GM12878 (cell line): ENCODE measurements at regions of chr17 and their contacts with region 1.

Region 1: GRCh38 chr17:28726226-28727130 is at the start of gene TLCD1:
- DNase-seq: no peak
- ATAC-seq: peak; percentile 44
- H3K4me3 ChIP-seq: peak within 1 kb of the TSS; percentile 72
- H3K27ac ChIP-seq: peak within 1 kb of the TSS; percentile 94
- H3K4me1 ChIP-seq: peaks cover 23% of the 10 kb centered on the region
- H3K27me3 ChIP-seq: no peaks in the 10 kb centered on the region
- CTCF ChIP-seq: peak; percentile 99 to 100 (median 99); a peak in 5 of 6 replicates
- EP300 ChIP-seq: no peak
- POLR2A ChIP-seq: no peak; the same call in 1 of the 2 replicates
- RAD21 ChIP-seq: peak; percentile 98
- polyA plus RNA-seq, gene TLCD1: 2.9 to 7.1 TPM

Region 2: DNA sequence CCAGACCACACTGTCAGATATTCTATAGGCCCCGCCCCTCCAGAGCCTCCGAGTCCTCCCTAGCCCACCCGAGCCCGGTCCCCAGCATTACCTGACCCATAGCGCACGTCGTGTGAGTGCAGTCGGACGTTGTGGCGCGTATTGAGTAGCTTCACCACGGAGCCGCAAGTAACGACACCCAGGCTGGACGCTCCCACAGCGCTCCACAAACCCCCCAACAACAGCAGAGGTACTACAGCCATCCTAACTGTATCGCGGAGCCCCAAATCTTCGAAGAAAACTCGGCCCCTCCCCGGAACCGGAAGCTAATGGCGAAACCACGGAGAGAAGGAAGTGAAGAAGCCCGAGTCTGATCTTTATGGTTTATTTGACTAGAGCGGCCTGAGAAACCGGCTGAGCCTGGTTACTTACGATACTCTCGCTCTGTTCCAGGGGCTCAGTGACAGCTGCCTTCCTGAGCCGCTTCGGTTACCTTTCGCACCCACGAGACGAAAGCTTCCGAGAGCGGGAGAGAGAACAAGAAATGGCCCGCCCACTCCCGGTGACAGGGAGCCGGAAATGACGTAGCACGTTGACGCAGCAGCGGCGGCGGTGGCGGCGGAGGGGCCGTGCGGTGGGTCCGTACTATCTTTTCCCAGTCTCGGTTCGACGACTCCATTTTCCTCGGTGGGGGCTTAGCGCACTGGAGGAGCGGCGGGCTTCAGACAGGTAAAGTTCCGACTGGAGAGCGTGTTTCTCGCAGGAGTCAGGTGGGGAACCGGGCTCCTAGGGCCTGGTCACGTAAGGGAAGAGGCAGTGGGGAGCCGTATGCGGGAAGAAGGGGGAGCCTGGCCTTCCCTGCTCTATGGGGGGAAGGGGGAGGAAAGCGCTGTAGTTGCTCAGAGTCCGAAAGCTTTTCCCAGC is 64.6 kb before region 1 on chr17 and contains the starts of genes SDF2 and SUPT6H:
- CTCF ChIA-PET with region 1: interaction called, 8 read pairs
- POLR2A ChIA-PET with region 1: interaction called, 5 read pairs
- RAD21 ChIA-PET with region 1: interaction called, 12 read pairs
- SMC1A ChIA-PET with region 1: interaction called, 5 read pairs
- in situ Hi-C with region 1: no loop called
- intact Hi-C with region 1: no loop called
- DNase-seq: peak; percentile 72
- ATAC-seq: peak; percentile 89
- H3K4me3 ChIP-seq: peak within 1 kb of the TSS; percentile 98
- H3K27ac ChIP-seq: peak within 1 kb of the TSS; percentile 100
- H3K4me1 ChIP-seq: peaks cover 3% of the 10 kb centered on the region; the same call in 1 of the 2 replicates
- H3K27me3 ChIP-seq: no peaks in the 10 kb centered on the region
- CTCF ChIP-seq: 0 out of 6 replicates have a peak, but pooled peaks of 1 of the 3 experiments have one; percentile 16
- EP300 ChIP-seq: peak in 1 of 2 experiments; percentile 17; a peak in 1 of 4 replicates
- POLR2A ChIP-seq: peak; percentile 83
- RAD21 ChIP-seq: no peak
- polyA plus RNA-seq, gene SDF2: 72.7 to 81.0 TPM
- polyA plus RNA-seq, gene SUPT6H: 1.7 to 2.4 TPM

Region 3: DNA sequence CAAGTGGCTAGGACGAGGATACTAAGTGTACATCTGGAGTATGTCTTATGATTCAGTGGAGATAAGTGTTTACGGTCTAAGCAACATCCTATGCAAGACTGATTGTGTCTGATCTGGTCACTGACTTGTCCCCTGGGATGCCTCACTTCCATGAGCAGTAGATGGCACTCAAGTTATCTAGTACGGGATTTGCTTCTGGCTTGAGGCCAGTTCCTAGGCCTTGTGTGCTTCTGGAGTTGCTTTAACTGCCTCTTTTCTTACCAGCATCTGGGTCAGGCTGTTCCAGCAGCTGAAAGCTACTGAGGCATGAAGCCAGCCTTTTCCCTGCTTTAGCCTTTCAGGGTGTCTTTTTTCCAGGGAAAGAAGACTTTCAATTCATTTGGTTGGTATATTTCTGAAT is 41.5 kb before region 1 on chr17:
- CTCF ChIA-PET with region 1: no interaction called
- POLR2A ChIA-PET with region 1: no interaction called
- RAD21 ChIA-PET with region 1: no interaction called
- SMC1A ChIA-PET with region 1: no interaction called
- in situ Hi-C with region 1: no loop called
- intact Hi-C with region 1: no loop called
- DNase-seq: no peak
- ATAC-seq: no peak
- H3K4me3 ChIP-seq: no peak overlapping the region
- H3K27ac ChIP-seq: no peak overlapping the region
- H3K4me1 ChIP-seq: no peaks in the 10 kb centered on the region
- H3K27me3 ChIP-seq: no peaks in the 10 kb centered on the region
- CTCF ChIP-seq: no peak
- EP300 ChIP-seq: no peak
- POLR2A ChIP-seq: no peak
- RAD21 ChIP-seq: no peak

Region 4: GRCh38 chr17:28703552-28704218 is 22.8 kb before region 1 on chr17:
- CTCF ChIA-PET with region 1: no interaction called
- POLR2A ChIA-PET with region 1: no interaction called
- RAD21 ChIA-PET with region 1: no interaction called
- SMC1A ChIA-PET with region 1: no interaction called
- in situ Hi-C with region 1: no loop called
- intact Hi-C with region 1: no loop called
- DNase-seq: no peak
- ATAC-seq: no peak
- H3K4me3 ChIP-seq: no peak overlapping the region
- H3K27ac ChIP-seq: no peak overlapping the region
- H3K4me1 ChIP-seq: no peaks in the 10 kb centered on the region
- H3K27me3 ChIP-seq: no peaks in the 10 kb centered on the region
- CTCF ChIP-seq: no peak
- EP300 ChIP-seq: no peak
- POLR2A ChIP-seq: no peak
- RAD21 ChIP-seq: no peak

Region 5: GRCh38 chr17:28750178-28751047 is 23.9 kb after region 1 on chr17:
- CTCF ChIA-PET with region 1: interaction called, 394 read pairs
- POLR2A ChIA-PET with region 1: interaction called, 485 read pairs
- RAD21 ChIA-PET with region 1: interaction called, 375 read pairs
- SMC1A ChIA-PET with region 1: interaction called, 326 read pairs
- in situ Hi-C with region 1: no loop called
- intact Hi-C with region 1: loop called (anchors 1 kb)
- DNase-seq: peak; percentile 69
- ATAC-seq: peak; percentile 78
- H3K4me3 ChIP-seq: 0 out of 2 replicates have a peak overlapping the region, but pooled peaks have one; percentile 17
- H3K27ac ChIP-seq: no peak overlapping the region
- H3K4me1 ChIP-seq: peaks cover 30% of the 10 kb centered on the region
- H3K27me3 ChIP-seq: no peaks in the 10 kb centered on the region
- CTCF ChIP-seq: peak; percentile 100; a peak in 5 of 6 replicates
- EP300 ChIP-seq: no peak
- POLR2A ChIP-seq: peak; percentile 78
- RAD21 ChIP-seq: peak; percentile 76

Region 6: DNA sequence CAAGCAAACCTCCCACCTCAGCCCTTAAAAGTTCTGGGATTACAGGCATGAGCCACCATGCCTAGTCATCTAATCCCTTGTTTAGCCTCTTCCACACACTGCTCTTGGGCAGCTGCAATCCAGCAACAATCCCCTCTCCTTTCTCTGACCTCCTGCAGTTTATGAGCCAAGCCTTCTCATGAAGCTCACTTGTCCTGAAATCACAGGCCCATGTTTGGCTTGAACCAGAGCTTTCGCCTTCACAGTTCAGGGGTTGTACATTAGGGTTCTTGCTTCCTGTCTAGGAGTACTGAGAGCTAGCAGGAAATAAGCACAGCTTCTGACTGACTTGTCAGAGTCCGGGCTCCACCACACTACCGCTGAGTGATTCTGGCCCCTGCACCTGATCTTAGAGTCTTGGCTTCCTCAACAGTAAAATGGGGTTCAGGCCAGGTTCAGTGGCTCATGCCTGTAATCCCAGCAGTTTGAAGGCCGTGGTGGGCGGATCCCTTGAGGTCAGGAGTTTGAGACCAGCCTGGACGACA is 144.6 kb after region 1 on chr17:
- CTCF ChIA-PET with region 1: interaction called, 11 read pairs
- POLR2A ChIA-PET with region 1: no interaction called
- RAD21 ChIA-PET with region 1: interaction called, 5 read pairs
- SMC1A ChIA-PET with region 1: interaction called, 3 read pairs
- in situ Hi-C with region 1: no loop called
- intact Hi-C with region 1: no loop called
- DNase-seq: peak; percentile 79
- ATAC-seq: peak; percentile 99
- H3K4me3 ChIP-seq: no peak overlapping the region
- H3K27ac ChIP-seq: peak overlapping the region; percentile 61
- H3K4me1 ChIP-seq: peaks cover 15% of the 10 kb centered on the region
- H3K27me3 ChIP-seq: no peaks in the 10 kb centered on the region
- CTCF ChIP-seq: no peak
- EP300 ChIP-seq: no peak
- POLR2A ChIP-seq: peak; percentile 61
- RAD21 ChIP-seq: peak; percentile 25; the same call in 1 of the 2 replicates

Region 7: DNA sequence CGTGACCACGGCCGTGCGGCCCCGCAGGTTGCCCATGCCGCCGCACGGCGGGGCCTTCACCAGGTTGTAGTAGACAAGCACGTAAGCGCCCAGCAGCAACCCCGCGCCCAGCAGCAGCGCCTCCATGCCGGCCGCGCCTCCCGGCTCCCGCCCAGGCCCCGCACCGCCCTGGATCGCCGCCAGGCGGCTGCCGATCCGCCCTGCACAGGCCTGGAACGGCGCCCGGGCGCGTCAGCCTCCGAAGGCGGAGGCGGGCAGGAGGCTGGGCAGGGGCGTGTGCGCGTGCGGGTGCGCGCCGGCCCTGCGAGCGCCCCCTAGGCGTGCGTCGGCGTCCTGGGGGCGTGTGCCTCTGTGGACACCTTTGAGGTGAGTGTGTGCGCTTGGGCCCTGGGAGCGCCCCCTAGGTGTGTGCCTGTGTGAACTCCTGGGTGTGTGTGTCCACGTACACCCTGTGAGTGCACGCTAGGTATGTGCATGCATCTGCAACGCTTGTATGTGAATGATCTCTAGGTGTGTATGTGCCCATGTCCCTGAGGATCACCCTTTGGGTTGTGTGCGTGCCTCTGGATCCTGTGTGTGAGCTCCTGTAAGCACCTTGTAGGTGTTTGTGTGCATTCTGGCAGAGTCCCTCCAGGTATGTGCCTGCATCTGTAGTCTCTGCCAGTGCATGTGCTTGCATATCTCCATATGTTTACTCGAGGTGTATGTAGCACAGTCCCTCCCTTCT is 176.5 kb after region 1 on chr17 and contains the start of gene DHRS13:
- CTCF ChIA-PET with region 1: interaction called, 48 read pairs
- POLR2A ChIA-PET with region 1: interaction called, 10 read pairs
- RAD21 ChIA-PET with region 1: interaction called, 19 read pairs
- SMC1A ChIA-PET with region 1: interaction called, 35 read pairs
- in situ Hi-C with region 1: no loop called
- intact Hi-C with region 1: loop called (anchors 2 kb)
- DNase-seq: peak; percentile 81
- ATAC-seq: peak; percentile 91
- H3K4me3 ChIP-seq: peak within 1 kb of the TSS; percentile 82
- H3K27ac ChIP-seq: no peak within 1 kb of the TSS; the same call in 1 of the 2 replicates
- H3K4me1 ChIP-seq: peaks cover 16% of the 10 kb centered on the region
- H3K27me3 ChIP-seq: no peaks in the 10 kb centered on the region
- CTCF ChIP-seq: peak; percentile 89 to 100 (median 97)
- EP300 ChIP-seq: peak in 1 of 2 experiments; percentile 51; a peak in 1 of 4 replicates
- POLR2A ChIP-seq: peak; percentile 70
- RAD21 ChIP-seq: peak; percentile 54
- polyA plus RNA-seq, gene DHRS13: 0.18 TPM in 1 of 2 experiments, not detected in the other

Region 8: DNA sequence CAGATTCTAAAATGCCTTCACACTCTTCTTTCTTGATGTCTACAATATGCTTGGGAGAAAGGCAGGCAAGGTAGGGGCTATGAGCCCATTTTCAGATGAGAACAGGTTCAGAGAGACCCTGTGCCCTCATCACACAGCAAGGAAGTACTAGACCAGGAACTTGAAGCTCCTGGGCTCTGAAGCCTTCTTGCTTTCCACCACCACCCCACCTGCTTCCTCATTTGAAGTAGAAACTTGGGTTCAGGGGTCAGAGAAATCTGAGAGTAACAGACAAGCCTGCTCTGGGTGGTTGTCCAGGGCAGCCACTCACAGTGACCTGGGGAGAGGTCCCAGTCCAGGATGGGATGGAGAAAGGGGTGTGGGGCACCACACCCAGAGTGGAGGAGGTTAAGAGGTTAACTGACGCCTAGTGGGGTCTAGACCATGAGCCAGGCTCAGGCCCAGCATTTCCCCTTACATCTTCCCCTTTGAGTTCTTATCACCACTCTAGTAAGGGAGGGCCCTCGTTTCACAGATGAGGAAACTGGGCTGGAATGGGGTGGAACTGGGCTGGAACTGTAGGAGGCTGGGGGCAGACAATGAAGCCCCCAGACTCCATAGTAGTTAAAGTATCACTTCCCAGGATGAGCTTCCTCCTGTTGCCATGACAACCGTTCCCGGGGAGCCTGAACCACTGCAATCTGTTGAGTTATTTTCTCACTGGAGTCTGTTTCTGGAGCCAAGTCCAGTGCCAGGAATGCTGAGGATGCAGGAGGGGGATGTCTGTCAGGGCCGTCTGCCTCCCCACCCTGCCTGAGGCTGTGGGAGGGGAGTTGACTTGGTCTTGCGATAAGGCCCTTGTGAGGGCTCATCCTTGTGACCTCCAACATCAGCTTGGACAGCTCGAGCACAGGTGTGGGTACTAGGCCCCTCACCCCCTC is 241.0 kb after region 1 on chr17:
- CTCF ChIA-PET with region 1: interaction called, 8 read pairs
- POLR2A ChIA-PET with region 1: no interaction called
- RAD21 ChIA-PET with region 1: interaction called, 10 read pairs
- SMC1A ChIA-PET with region 1: interaction called, 4 read pairs
- in situ Hi-C with region 1: no loop called
- intact Hi-C with region 1: no loop called
- DNase-seq: no peak
- ATAC-seq: peak; percentile 59
- H3K4me3 ChIP-seq: no peak overlapping the region
- H3K27ac ChIP-seq: no peak overlapping the region
- H3K4me1 ChIP-seq: peaks cover 3% of the 10 kb centered on the region; the same call in 1 of the 2 replicates
- H3K27me3 ChIP-seq: peaks cover 0 to 2% of the 10 kb centered on the region in 2 experiments; a peak in 1 of 4 replicates
- CTCF ChIP-seq: no peak
- EP300 ChIP-seq: no peak
- POLR2A ChIP-seq: no peak
- RAD21 ChIP-seq: no peak